ENCODE measurements at regions of chr4 and their contacts with region 1.

Region 1: DNA sequence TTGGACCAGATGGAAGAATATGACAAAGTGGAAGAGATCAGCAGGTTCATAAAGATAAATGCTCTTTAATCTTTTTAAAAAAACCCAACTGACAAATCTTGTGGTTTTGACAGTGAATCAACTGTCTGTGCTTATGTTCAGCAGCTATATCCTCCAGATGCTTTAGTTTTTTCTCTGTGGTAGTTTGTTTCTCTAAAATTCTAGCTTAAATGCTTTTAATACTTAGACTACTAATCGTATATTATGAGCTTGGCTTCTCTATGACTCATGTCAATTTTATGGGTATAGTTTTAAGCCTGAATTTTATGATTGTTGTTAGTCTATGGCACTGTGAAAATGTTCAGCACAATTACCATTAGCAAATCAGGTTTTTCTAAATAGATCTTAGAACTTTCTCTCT is 12.9 kb downstream of the HHIP start:
- DNase-seq: peak; percentile 44
- ATAC-seq: peak; percentile 77
- H3K4me3 ChIP-seq: no peak overlapping the region
- H3K27ac ChIP-seq: no peak overlapping the region
- H3K4me1 ChIP-seq: peaks cover 4% of the 10 kb centered on the region; the same call in 1 of the 2 replicates
- H3K27me3 ChIP-seq: 0 out of 2 replicates have a peak, but pooled peaks cover 4% of the 10 kb centered on the region
- CTCF ChIP-seq: no peak

Region 2: GRCh38 chr4:144288011-144288903 is 370.6 kb before region 1 on chr4:
- CTCF ChIA-PET with region 1: no interaction called
- POLR2A ChIA-PET with region 1: no interaction called
- intact Hi-C with region 1: no loop called
- DNase-seq: no peak
- ATAC-seq: no peak
- H3K4me3 ChIP-seq: no peak overlapping the region
- H3K27ac ChIP-seq: no peak overlapping the region
- H3K4me1 ChIP-seq: no peaks in the 10 kb centered on the region
- H3K27me3 ChIP-seq: 0 out of 2 replicates have a peak, but pooled peaks cover 4% of the 10 kb centered on the region
- CTCF ChIP-seq: no peak

Region 3: DNA sequence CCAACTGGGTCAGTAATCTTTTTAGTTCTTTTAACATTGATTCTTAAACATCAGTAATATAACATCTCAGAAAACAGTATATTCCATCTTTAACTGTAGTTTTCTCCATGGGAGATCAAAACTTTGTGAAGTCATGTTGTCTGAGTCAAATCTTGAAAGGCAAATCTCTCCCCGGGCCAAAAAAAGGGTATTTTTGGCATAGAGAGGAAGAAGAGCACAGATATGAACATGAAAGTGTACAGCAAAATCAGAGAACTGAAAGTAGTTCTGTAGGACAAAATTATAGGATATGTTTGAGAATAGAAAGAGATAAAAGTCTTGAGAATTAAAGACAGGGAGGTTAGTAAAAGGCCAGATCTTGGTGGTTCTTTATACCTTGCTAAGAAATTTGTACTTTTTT is 342.0 kb before region 1 on chr4:
- CTCF ChIA-PET with region 1: no interaction called
- POLR2A ChIA-PET with region 1: no interaction called
- intact Hi-C with region 1: no loop called
- DNase-seq: no peak
- ATAC-seq: no peak
- H3K4me3 ChIP-seq: no peak overlapping the region
- H3K27ac ChIP-seq: no peak overlapping the region
- H3K4me1 ChIP-seq: no peaks in the 10 kb centered on the region
- H3K27me3 ChIP-seq: 0 out of 2 replicates have a peak, but pooled peaks cover 3% of the 10 kb centered on the region
- CTCF ChIP-seq: no peak

Region 4: GRCh38 chr4:144518181-144518902 is 140.6 kb before region 1 on chr4:
- CTCF ChIA-PET with region 1: no interaction called
- POLR2A ChIA-PET with region 1: no interaction called
- intact Hi-C with region 1: no loop called
- DNase-seq: no peak
- ATAC-seq: no peak
- H3K4me3 ChIP-seq: no peak overlapping the region
- H3K27ac ChIP-seq: no peak overlapping the region
- H3K4me1 ChIP-seq: no peaks in the 10 kb centered on the region
- H3K27me3 ChIP-seq: peaks cover 60% of the 10 kb centered on the region
- CTCF ChIP-seq: no peak

Region 5: DNA sequence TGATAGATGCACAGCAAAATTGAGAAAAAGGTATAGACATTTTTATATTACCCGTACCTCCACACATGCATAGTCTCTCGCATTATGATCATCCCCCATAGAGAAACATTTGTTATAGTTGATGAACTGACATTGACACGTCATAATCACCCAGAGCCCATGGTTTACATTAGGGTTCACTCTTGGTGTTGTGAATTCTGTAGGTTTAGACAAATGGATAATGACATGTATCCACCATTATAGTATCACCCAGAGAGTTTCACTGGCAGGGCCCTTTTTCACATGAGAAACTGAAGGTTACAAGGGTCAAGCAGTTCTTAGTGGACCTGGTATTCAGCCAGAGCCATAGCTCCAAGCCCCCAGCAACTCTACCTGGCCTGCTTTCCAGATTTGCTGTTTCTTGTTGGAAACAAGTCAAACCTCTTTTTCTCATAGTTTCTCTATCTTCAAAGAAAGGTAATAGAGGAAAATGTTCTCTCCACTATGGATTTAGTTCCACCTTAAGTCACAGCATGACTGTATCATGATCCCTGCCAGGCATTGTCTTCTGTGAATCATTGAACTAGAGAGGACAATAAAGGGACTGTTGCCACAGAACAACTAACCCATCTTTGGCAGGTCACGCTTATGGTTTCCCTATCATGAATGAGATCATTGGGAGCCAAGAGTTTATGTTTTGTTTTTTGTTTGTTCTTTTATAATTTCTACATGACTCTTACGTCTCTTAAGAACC is 51.1 kb after region 1 on chr4:
- CTCF ChIA-PET with region 1: no interaction called
- POLR2A ChIA-PET with region 1: no interaction called
- intact Hi-C with region 1: loop called (anchors 5 kb)
- DNase-seq: peak; percentile 90
- ATAC-seq: peak; percentile 83
- H3K4me3 ChIP-seq: no peak overlapping the region
- H3K27ac ChIP-seq: peak overlapping the region; percentile 59
- H3K4me1 ChIP-seq: peaks cover 27% of the 10 kb centered on the region
- H3K27me3 ChIP-seq: 0 out of 2 replicates have a peak, but pooled peaks cover 6% of the 10 kb centered on the region
- CTCF ChIP-seq: no peak

Region 6: DNA sequence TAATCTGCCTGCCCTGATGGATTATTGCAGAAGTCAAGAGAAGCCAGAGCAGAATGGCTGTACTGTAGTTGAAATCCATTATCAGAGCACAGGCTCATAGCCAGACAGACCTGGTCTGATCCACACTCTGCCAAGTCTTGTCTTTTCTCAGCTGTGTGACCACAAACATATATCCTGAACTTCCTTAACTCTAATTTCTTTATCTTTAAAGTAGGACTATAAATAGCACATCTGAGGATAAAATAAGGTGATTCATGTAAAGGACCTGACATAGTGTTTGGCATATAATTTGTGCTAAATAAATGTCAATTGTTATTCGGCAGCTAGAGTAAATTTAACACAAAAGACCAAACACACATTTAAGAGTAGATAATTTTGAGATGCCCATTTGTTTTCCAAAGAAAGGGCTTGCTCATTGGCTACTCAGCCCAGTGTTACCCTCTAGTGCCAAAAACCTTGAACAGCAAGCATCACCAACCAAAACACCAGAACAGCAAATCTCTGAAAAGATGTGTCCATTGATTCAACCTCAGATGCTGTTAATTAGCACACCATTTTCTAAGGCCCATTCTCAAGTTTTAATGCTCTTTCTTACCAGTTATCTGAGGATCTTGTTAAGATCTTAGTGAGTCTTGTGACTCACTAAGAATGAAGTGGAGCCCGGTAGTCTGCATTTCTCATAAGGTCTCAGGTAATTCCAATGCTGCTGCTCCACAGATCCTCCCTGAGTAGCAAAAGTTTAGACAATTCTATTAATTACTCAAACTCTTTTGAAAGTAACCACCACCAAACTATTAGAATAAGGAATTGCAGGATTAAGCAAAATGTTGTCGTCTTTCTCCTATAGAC is 95.9 kb after region 1 on chr4:
- CTCF ChIA-PET with region 1: no interaction called
- POLR2A ChIA-PET with region 1: no interaction called
- intact Hi-C with region 1: loop called (anchors 5 kb)
- DNase-seq: peak; percentile 50
- ATAC-seq: peak; percentile 72
- H3K4me3 ChIP-seq: no peak overlapping the region
- H3K27ac ChIP-seq: no peak overlapping the region
- H3K4me1 ChIP-seq: 0 out of 2 replicates have a peak, but pooled peaks cover 7% of the 10 kb centered on the region
- H3K27me3 ChIP-seq: no peaks in the 10 kb centered on the region
- CTCF ChIP-seq: peak; percentile 83

Measured in PC-3 (cell line).